Calu3 (cell line): ENCODE measurements at regions of chr14 and their contacts with region 1.

Region 1: DNA sequence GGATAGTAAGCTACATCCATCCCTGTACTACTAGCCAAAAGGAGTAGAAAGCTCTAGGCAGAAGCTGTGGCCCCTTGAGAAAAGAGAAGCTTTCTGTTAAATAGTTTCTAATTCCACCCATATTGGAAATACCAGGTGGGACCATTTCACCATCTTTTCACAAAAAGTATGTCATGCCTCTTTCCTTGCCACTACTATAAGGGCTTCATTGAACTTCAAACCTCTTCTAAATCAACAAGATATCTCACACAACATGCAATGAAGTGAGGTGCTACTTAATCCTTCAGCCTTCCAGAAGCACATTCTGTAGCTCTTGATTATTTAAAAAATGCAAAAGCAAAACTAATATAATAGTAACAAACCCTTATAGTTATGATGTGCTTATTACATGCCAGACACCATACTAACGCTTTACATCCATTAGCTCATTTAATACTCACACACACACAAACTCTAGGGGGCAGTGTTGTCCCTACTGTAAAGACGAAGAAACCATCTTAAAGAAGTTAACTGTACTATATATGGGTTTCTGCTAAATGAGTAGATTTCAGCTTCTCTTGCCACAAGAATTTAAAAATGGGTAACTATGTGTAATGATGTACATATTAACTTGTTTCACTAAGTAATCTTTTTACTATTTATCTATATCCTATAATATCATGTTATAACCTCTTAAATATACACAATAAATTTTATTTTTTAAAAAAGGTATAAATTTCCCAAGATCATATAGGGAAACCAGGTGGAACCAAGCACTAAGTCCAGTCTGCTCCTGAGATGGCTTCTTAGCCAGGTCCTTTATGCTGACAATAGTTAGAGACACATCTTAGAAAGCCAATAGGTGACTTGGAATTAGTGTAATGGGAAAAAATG is 124.4 kb downstream of the RPS29 start:
- DNase-seq: peak; percentile 66
- H3K4me3 Mint-ChIP-seq: no peak overlapping the region
- H3K27ac Mint-ChIP-seq: no peak overlapping the region
- H3K4me1 Mint-ChIP-seq: no peaks in the 10 kb centered on the region
- H3K27me3 Mint-ChIP-seq: peaks cover 50% of the 10 kb centered on the region
- CTCF ChIP-seq: peak; percentile 40

Region 2: GRCh38 chr14:49497725-49498348 is 36.1 kb after region 1 on chr14:
- CTCF ChIA-PET with region 1: interaction called, 29 read pairs
- intact Hi-C with region 1: loop called (anchors 2 kb)
- DNase-seq: peak; percentile 23
- H3K4me3 Mint-ChIP-seq: no peak overlapping the region
- H3K27ac Mint-ChIP-seq: no peak overlapping the region
- H3K4me1 Mint-ChIP-seq: no peaks in the 10 kb centered on the region
- H3K27me3 Mint-ChIP-seq: peaks cover 78% of the 10 kb centered on the region
- CTCF ChIP-seq: peak; percentile 64

Region 3: GRCh38 chr14:49550286-49551184 is 88.8 kb after region 1 on chr14:
- CTCF ChIA-PET with region 1: interaction called, 13 read pairs
- intact Hi-C with region 1: loop called (anchors 5 kb)
- DNase-seq: no peak
- H3K4me3 Mint-ChIP-seq: no peak overlapping the region
- H3K27ac Mint-ChIP-seq: no peak overlapping the region
- H3K4me1 Mint-ChIP-seq: no peaks in the 10 kb centered on the region
- H3K27me3 Mint-ChIP-seq: peaks cover 9% of the 10 kb centered on the region
- CTCF ChIP-seq: no peak

Region 4: DNA sequence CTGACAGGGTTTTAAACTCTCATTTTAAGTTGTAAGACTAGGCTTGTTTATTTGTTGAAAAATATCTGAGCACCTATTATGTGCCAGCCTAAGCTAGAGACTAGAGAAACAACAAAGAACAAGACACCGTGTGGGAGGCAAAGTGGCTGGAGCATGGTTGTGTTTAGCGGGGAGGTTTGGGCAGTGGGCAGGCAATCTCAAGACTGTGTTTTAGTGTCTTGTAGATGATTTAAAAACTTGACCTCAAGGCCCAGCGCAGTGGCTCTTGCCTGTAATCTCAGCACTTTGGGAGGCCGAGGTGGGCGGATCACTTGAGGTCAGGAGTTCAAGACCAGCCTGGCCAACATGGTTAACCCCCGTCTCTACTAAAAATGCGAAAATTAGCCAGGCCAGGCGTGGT is 150.9 kb after region 1 on chr14:
- CTCF ChIA-PET with region 1: no interaction called
- intact Hi-C with region 1: no loop called
- DNase-seq: no peak
- H3K4me3 Mint-ChIP-seq: no peak overlapping the region
- H3K27ac Mint-ChIP-seq: no peak overlapping the region
- H3K4me1 Mint-ChIP-seq: peaks cover 3% of the 10 kb centered on the region
- H3K27me3 Mint-ChIP-seq: no peaks in the 10 kb centered on the region
- CTCF ChIP-seq: no peak